Caco-2 (cell line): ENCODE measurements at regions of chr11 and their contacts with region 1.

Region 1: GRCh38 chr11:134196756-134197155 is 27.0 kb downstream of the NCAPD3 start:
- DNase-seq: no peak
- H3K4me3 ChIP-seq: no peak overlapping the region
- H3K4me3 Mint-ChIP-seq: no peak overlapping the region
- H3K27ac Mint-ChIP-seq: no peak overlapping the region
- H3K4me1 ChIP-seq: peaks cover 17% of the 10 kb centered on the region
- H3K4me1 Mint-ChIP-seq: peaks cover 21% of the 10 kb centered on the region
- H3K27me3 ChIP-seq: no peaks in the 10 kb centered on the region
- H3K27me3 Mint-ChIP-seq: no peaks in the 10 kb centered on the region
- CTCF ChIP-seq: no peak

Region 2: GRCh38 chr11:133659538-133660201 is 537.1 kb before region 1 on chr11:
- CTCF ChIA-PET with region 1: no interaction called
- POLR2A ChIA-PET with region 1: no interaction called
- intact Hi-C with region 1: no loop called
- DNase-seq: no peak
- H3K4me3 ChIP-seq: no peak overlapping the region
- H3K4me3 Mint-ChIP-seq: no peak overlapping the region
- H3K27ac Mint-ChIP-seq: no peak overlapping the region
- H3K4me1 ChIP-seq: no peaks in the 10 kb centered on the region
- H3K4me1 Mint-ChIP-seq: no peaks in the 10 kb centered on the region
- H3K27me3 ChIP-seq: no peaks in the 10 kb centered on the region
- H3K27me3 Mint-ChIP-seq: peaks cover 17% of the 10 kb centered on the region
- CTCF ChIP-seq: no peak

Region 3: GRCh38 chr11:134207538-134208239 is 10.9 kb after region 1 on chr11:
- CTCF ChIA-PET with region 1: interaction called, 7 read pairs
- POLR2A ChIA-PET with region 1: interaction called, 17 read pairs
- intact Hi-C with region 1: no loop called
- DNase-seq: peak; percentile 66 to 82
- H3K4me3 ChIP-seq: no peak overlapping the region
- H3K4me3 Mint-ChIP-seq: no peak overlapping the region
- H3K27ac Mint-ChIP-seq: no peak overlapping the region
- H3K4me1 ChIP-seq: no peaks in the 10 kb centered on the region
- H3K4me1 Mint-ChIP-seq: no peaks in the 10 kb centered on the region
- H3K27me3 ChIP-seq: no peaks in the 10 kb centered on the region
- H3K27me3 Mint-ChIP-seq: no peaks in the 10 kb centered on the region
- CTCF ChIP-seq: peak; percentile 62 to 94